Activated CD4-positive, alpha-beta T cell treated with anti-CD3 and anti-CD28 coated beads, Interleukin-2, amount 10 ng/mL, durations not matched to agents 24 days and 14 days (primary cell): ENCODE measurements at regions of chrX and their contacts with region 1.

Region 1: GRCh38 chrX:120499301-120500072 is 30.4 kb upstream of the LAMP2 start:
- DNase-seq: no peak
- H3K4me3 Mint-ChIP-seq: no peak overlapping the region
- H3K27ac Mint-ChIP-seq: no peak overlapping the region
- H3K4me1 Mint-ChIP-seq: peaks cover 7% of the 10 kb centered on the region
- H3K27me3 Mint-ChIP-seq: no peaks in the 10 kb centered on the region

Region 2: GRCh38 chrX:120603707-120604360 is 104.3 kb after region 1 on chrX and contains the start of gene MCTS1:
- intact Hi-C with region 1: loop called (anchors 10 kb)
- DNase-seq: peak; percentile 94
- H3K4me3 Mint-ChIP-seq: peak within 1 kb of the TSS; percentile 97
- H3K27ac Mint-ChIP-seq: peak within 1 kb of the TSS; percentile 96
- H3K4me1 Mint-ChIP-seq: peaks cover 2% of the 10 kb centered on the region
- H3K27me3 Mint-ChIP-seq: peaks cover 1% of the 10 kb centered on the region
- total RNA-seq, gene MCTS1: 78.5 and 79.0 TPM in 2 replicates

Region 3: DNA sequence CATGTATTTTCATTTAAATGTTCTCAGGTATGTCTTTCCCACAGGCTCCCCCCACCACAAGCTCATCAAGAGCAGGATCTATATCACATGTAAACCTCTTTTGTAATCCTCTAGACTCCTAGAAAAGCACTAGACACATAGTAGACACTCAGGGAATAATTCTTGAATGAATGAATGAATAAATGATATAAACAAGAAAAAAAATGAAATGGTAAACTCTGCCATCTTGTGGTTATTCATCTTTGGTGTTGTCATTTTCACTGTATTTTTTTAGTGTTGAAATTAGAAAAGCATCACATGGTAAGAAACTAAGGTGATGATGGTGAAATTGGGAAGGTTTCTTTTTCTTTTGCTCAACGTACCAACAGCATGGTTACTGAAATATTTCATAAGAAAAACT is 164.6 kb after region 1 on chrX:
- intact Hi-C with region 1: loop called (anchors 1 kb)
- DNase-seq: no peak
- H3K4me3 Mint-ChIP-seq: no peak overlapping the region
- H3K27ac Mint-ChIP-seq: no peak overlapping the region
- H3K4me1 Mint-ChIP-seq: peaks cover 6% of the 10 kb centered on the region
- H3K27me3 Mint-ChIP-seq: no peaks in the 10 kb centered on the region

Region 4: GRCh38 chrX:120769576-120770341 is 270.3 kb after region 1 on chrX:
- intact Hi-C with region 1: loop called (anchors 1 kb)
- DNase-seq: peak; percentile 66
- H3K4me3 Mint-ChIP-seq: no peak overlapping the region
- H3K27ac Mint-ChIP-seq: no peak overlapping the region
- H3K4me1 Mint-ChIP-seq: no peaks in the 10 kb centered on the region
- H3K27me3 Mint-ChIP-seq: no peaks in the 10 kb centered on the region